GM18951 (cell line): ENCODE measurements at regions of chr2 and their contacts with region 1.

Region 1: GRCh38 chr2:109128048-109128465 is 948 bp upstream of the SH3RF3 start:
- POLR2A ChIP-seq: no peak

Region 2: DNA sequence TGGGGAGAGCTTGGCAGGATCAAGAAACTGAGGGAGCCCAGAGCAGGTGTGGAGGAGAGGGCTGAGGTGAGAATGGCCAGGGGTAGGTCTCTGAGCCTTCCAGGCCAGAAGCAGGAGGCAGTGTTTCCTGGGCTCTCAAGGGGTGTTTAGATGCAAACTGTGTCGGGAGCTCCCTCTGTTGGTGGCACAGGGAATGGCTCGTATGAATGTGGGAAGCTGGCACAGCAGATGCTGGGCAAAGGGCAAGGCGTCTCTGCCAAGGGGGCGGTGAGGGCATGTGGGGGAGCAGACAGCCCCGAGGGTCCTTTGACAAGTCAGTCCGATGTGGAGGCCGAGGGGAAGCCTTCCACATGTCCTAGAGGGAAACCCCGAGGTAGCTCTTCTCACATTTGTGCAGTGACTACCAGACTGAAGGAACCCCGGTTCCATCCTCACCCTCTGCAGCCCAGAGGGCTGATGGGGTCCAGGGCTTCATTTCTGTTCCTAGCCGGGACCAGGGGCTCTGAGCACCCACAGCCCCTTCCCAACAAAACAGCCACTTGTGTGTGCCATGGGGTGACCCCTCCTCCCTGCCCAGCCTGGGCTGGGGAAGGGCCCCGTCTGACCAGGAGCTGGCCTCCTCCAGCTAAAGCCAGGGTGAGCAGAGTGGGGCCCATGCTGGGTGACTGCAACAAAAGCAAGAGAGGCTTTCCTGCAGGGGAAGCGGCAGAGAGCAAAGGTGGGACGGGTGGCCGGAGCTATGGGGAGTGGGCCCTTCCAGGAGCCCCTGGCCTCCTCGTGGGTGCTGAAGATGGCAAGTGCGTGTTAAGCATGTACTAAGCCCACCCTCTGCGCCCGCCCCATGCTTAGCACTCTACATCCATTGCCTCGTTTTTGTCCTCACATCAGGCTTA is 382.3 kb after region 1 on chr2:
- in situ Hi-C with region 1: loop called (anchors 25 kb)
- POLR2A ChIP-seq: no peak